Vagina (tissue), 2 donors: ENCODE measurements at regions of chrX and their contacts with region 1.

Region 1: DNA sequence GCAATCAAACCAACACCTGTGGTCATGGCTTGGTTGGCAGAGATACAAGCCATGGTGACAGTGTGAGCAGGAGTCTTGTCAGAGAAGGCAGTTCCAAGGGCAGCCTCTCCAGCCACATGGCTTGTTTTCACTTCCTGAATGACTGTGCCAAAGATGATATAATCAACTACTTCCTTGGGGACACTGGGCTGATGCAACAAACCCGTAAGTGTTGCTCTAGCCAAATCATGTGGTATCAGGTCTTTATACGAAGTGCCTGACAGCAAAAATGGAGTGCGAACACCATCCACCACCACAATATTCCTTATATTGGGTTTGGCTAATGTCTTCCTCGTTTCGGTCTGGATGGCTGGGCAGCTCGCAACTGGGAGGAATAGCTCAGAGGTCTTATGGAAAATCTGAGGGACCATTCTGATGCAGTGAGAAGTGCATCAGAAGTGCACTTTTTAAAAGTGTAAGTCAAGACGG is 922.0 kb downstream of the NLGN4X start:
- DNase-seq: no peak
- H3K4me3 ChIP-seq: no peak overlapping the region
- H3K27ac ChIP-seq: no peak overlapping the region
- H3K4me1 ChIP-seq: no peaks in the 10 kb centered on the region
- H3K27me3 ChIP-seq: no peaks in the 10 kb centered on the region
- CTCF ChIP-seq: no peak
- POLR2A ChIP-seq: no peak

Region 2: GRCh38 chrX:5295004-5295403 is 11.7 kb before region 1 on chrX:
- intact Hi-C with region 1: loop called (anchors 1 kb)
- DNase-seq: no peak
- H3K4me3 ChIP-seq: no peak overlapping the region
- H3K27ac ChIP-seq: no peak overlapping the region
- H3K4me1 ChIP-seq: no peaks in the 10 kb centered on the region
- H3K27me3 ChIP-seq: no peaks in the 10 kb centered on the region
- CTCF ChIP-seq: no peak
- POLR2A ChIP-seq: no peak

Region 3: GRCh38 chrX:5681159-5681558 is 374.5 kb after region 1 on chrX:
- intact Hi-C with region 1: no loop called
- DNase-seq: no peak
- H3K4me3 ChIP-seq: no peak overlapping the region
- H3K27ac ChIP-seq: no peak overlapping the region
- H3K4me1 ChIP-seq: no peaks in the 10 kb centered on the region
- H3K27me3 ChIP-seq: no peaks in the 10 kb centered on the region
- CTCF ChIP-seq: no peak
- POLR2A ChIP-seq: no peak